Psoas muscle (tissue), 8 donors: ENCODE measurements at regions of chr19 and their contacts with region 1.

Region 1: GRCh38 chr19:38929929-38930775 is at the start of gene SARS2:
- DNase-seq: peak; percentile 92 to 96
- ATAC-seq: peak; percentile 89 to 94 (median 92)
- H3K4me3 ChIP-seq: peak within 1 kb of the TSS; percentile 78
- H3K27ac ChIP-seq: peak within 1 kb of the TSS; percentile 93
- H3K4me1 ChIP-seq: peaks cover 18% of the 10 kb centered on the region
- H3K27me3 ChIP-seq: no peaks in the 10 kb centered on the region
- CTCF ChIP-seq: peak; percentile 98
- total RNA-seq, gene SARS2: 15.1 to 17.8 (median 16.8) TPM

Region 2: GRCh38 chr19:38729653-38730469 is 200.3 kb before region 1 on chr19:
- intact Hi-C with region 1: loop called in 1 of 2 experiments (anchors 5 kb)
- DNase-seq: peak; percentile 78 to 86
- ATAC-seq: peak; percentile 60 to 73 (median 64)
- H3K4me3 ChIP-seq: no peak overlapping the region
- H3K27ac ChIP-seq: no peak overlapping the region
- H3K4me1 ChIP-seq: peaks cover 8% of the 10 kb centered on the region
- H3K27me3 ChIP-seq: no peaks in the 10 kb centered on the region
- CTCF ChIP-seq: peak; percentile 73